Activated naive CD4-positive, alpha-beta T cell treated with anti-CD3 and anti-CD28 coated beads for 36 hours (primary cell): ENCODE measurements at regions of chr4 and their contacts with region 1.

Region 1: GRCh38 chr4:122577808-122578781 is 42.8 kb downstream of the IL21 start:
- DNase-seq: peak; percentile 88
- H3K4me3 Mint-ChIP-seq: peak overlapping the region; percentile 65
- H3K27ac Mint-ChIP-seq: peak overlapping the region; percentile 99
- H3K4me1 Mint-ChIP-seq: peaks cover 76% of the 10 kb centered on the region
- H3K27me3 Mint-ChIP-seq: no peaks in the 10 kb centered on the region

Region 2: GRCh38 chr4:121462660-121463261 is 1115.3 kb before region 1 on chr4:
- CTCF ChIA-PET with region 1: no interaction called
- intact Hi-C with region 1: loop called (anchors 5 kb)
- DNase-seq: peak; percentile 69
- H3K4me3 Mint-ChIP-seq: no peak overlapping the region
- H3K27ac Mint-ChIP-seq: no peak overlapping the region
- H3K4me1 Mint-ChIP-seq: no peaks in the 10 kb centered on the region
- H3K27me3 Mint-ChIP-seq: peaks cover 20% of the 10 kb centered on the region

Region 3: DNA sequence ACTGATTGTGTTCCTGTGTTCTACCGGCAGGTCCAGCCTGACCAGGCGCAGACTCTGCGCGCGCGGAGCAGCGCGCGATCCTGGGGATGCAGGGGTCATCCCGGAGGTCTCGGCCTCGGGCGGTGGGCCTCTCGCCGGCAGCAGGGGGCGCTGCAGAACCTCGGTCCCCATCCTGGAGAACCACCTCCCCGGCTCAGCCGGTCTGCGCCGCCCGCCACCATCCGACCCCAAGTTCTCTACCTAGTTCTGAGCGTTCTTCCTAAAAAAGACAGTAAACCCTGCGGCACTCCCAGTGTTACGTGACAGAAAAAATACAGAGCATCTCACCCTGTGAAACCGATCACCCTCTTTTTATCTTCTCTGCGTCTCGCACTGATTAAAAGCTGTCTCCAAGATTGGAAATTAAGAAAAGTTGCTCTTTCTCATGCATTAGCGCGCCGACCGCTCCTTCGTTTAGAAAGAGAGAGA is 627.8 kb before region 1 on chr4:
- CTCF ChIA-PET with region 1: interaction called, 6 read pairs
- intact Hi-C with region 1: loop called (anchors 1 kb)
- DNase-seq: peak; percentile 92
- H3K4me3 Mint-ChIP-seq: peak overlapping the region; percentile 86
- H3K27ac Mint-ChIP-seq: no peak overlapping the region
- H3K4me1 Mint-ChIP-seq: peaks cover 5% of the 10 kb centered on the region
- H3K27me3 Mint-ChIP-seq: peaks cover 32% of the 10 kb centered on the region

Region 4: GRCh38 chr4:122205690-122206089 is 372.4 kb before region 1 on chr4:
- CTCF ChIA-PET with region 1: interaction called, 3 read pairs
- intact Hi-C with region 1: loop called (anchors 1 kb)
- DNase-seq: no peak
- H3K4me3 Mint-ChIP-seq: no peak overlapping the region
- H3K27ac Mint-ChIP-seq: no peak overlapping the region
- H3K4me1 Mint-ChIP-seq: no peaks in the 10 kb centered on the region
- H3K27me3 Mint-ChIP-seq: no peaks in the 10 kb centered on the region

Region 5: DNA sequence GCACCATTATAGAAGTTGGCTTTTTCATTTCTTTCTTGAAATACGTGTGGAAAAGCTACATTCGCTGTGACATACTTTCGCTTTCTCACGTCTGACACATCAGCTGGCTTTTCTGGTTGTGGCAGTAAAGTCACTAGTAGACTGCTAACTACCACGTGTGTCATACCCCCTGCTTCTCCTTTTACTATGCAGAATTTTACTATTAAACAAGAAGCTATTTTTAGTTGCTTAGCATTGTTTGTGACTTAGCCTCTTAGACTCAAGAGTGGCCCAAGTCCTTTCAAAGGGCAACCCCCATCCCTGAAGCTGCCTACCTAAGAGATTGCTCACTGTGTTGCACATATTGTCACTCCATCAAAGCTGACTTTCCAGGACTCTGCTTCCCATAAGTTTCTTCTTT is 119.5 kb before region 1 on chr4:
- CTCF ChIA-PET with region 1: interaction called, 61 read pairs
- intact Hi-C with region 1: loop called (anchors 1 kb)
- DNase-seq: peak; percentile 82
- H3K4me3 Mint-ChIP-seq: peak overlapping the region; percentile 68
- H3K27ac Mint-ChIP-seq: peak overlapping the region; percentile 99
- H3K4me1 Mint-ChIP-seq: peaks cover 43% of the 10 kb centered on the region
- H3K27me3 Mint-ChIP-seq: no peaks in the 10 kb centered on the region

Region 6: GRCh38 chr4:122555216-122555615 is 22.9 kb before region 1 on chr4:
- CTCF ChIA-PET with region 1: interaction called, 23 read pairs
- intact Hi-C with region 1: loop called (anchors 1 kb)
- DNase-seq: no peak
- H3K4me3 Mint-ChIP-seq: no peak overlapping the region
- H3K27ac Mint-ChIP-seq: peak overlapping the region; percentile 96
- H3K4me1 Mint-ChIP-seq: peaks cover 77% of the 10 kb centered on the region
- H3K27me3 Mint-ChIP-seq: no peaks in the 10 kb centered on the region